K562 (cell line): ENCODE measurements at regions of chr2 and their contacts with region 1.

Region 1: DNA sequence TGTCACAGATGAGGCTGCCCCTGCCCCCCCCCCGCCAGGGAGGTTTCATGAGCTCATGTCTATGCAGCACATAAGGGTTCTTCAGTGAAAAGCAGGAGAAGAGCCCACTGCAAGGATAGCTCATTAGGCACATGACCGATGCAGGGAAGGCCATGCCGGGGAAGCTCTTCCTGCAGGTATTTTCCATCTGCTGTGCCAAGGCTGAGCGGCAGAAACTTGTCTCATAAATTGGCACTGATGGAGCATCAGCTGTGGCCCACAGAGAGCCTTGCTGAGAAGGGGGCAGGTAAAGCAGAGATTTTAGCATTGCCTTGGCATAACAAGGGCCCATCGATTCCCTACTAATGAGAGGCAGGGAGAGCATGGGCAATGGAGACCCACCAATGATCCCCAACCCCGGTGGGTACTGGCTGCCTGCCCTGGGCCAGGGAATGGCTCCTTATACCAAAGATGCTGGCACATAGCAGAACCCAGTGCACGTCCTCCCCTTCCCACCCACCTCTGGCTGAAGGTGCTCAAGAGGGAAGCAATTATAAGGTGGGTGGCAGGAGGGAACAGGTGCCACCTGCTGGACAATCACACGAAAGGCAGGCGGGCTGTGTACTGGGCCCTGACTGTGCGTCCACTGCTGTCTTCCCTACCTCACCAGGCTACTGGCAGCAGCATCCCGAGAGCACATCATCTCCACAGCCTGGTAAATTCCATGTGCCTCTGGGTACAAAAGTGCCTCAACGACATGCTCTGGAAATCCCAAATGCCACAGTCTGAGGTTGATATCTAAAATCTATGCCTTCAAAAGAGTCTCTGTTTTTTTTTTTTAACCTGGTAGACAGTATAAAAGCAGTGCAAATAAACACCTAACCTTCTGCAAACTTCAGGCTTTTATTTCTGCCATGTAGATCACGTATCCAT is 41.4 kb downstream of the STEAP3 start:
- DNase-seq: peak; percentile 64 to 73 (median 68)
- ATAC-seq: peak; percentile 99
- H3K4me3 ChIP-seq: no peak overlapping the region
- H3K27ac ChIP-seq: no peak overlapping the region
- H3K4me1 ChIP-seq: peaks cover 2 to 7% of the 10 kb centered on the region in 2 experiments; a peak in 3 of 5 replicates
- H3K27me3 ChIP-seq: no peaks in the 10 kb centered on the region
- CTCF ChIP-seq: peak; percentile 76 to 85 (median 79)
- EP300 ChIP-seq: no peak
- POLR2A ChIP-seq: no peak
- RAD21 ChIP-seq: peak; percentile 61 to 75

Region 2: GRCh38 chr2:119234377-119235019 is 30.5 kb before region 1 on chr2:
- CTCF ChIA-PET with region 1: interaction called, 10 read pairs
- POLR2A ChIA-PET with region 1: no interaction called
- in situ Hi-C with region 1: no loop called
- intact Hi-C with region 1: no loop called
- DNase-seq: peak; percentile 34 to 45 (median 38)
- ATAC-seq: peak; percentile 93
- H3K4me3 ChIP-seq: no peak overlapping the region
- H3K27ac ChIP-seq: no peak overlapping the region
- H3K4me1 ChIP-seq: peaks cover 0 to 6% of the 10 kb centered on the region in 2 experiments; a peak in 2 of 5 replicates
- H3K27me3 ChIP-seq: no peaks in the 10 kb centered on the region
- CTCF ChIP-seq: peak; percentile 52 to 61 (median 61)
- EP300 ChIP-seq: no peak
- POLR2A ChIP-seq: no peak
- RAD21 ChIP-seq: peak; percentile 26 to 56; a peak in 2 of 4 replicates